ENCODE measurements at regions of chr12 and their contacts with region 1.

Region 1: GRCh38 chr12:55955800-55956508 is 9.9 kb downstream of the PMEL start:
- DNase-seq: peak; percentile 90 to 91
- H3K4me3 ChIP-seq: no peak overlapping the region
- H3K4me3 Mint-ChIP-seq: peak overlapping the region; percentile 60
- H3K27ac Mint-ChIP-seq: peak overlapping the region; percentile 93
- H3K4me1 ChIP-seq: peaks cover 44% of the 10 kb centered on the region
- H3K4me1 Mint-ChIP-seq: peaks cover 41% of the 10 kb centered on the region
- H3K27me3 ChIP-seq: no peaks in the 10 kb centered on the region
- H3K27me3 Mint-ChIP-seq: no peaks in the 10 kb centered on the region
- CTCF ChIP-seq: peak; percentile 69 to 74

Region 2: DNA sequence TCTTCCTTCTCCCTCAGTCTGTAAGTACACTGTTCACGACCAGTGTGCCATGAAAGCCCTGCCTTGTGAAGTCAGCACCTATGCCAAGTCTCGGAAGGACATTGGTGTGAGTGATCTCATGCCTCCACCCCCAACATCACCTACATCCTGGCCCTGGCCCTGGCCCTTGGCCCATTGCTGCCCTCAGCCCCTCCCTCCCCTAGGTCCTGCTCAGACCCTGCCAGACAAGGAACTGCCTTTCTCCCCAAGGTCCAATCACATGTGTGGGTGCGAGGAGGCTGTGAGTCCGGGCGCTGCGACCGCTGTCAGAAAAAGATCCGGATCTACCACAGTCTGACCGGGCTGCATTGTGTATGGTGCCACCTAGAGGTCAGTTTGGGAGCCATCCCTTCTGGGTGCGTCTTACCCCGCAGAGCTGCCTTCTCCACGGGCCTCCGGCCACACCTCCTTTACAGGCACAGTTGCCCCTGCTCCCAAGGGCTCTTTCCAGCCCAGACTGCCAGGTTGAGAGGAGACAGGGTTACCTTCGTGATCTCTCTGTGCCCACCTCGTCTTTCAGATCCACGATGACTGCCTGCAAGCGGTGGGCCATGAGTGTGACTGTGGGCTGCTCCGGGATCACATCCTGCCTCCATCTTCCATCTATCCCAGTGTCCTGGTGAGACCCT is 15.8 kb before region 1 on chr12:
- CTCF ChIA-PET with region 1: interaction called, 7 read pairs
- POLR2A ChIA-PET with region 1: no interaction called
- intact Hi-C with region 1: loop called (anchors 2 kb)
- DNase-seq: peak; percentile 84 to 87
- H3K4me3 ChIP-seq: no peak overlapping the region
- H3K4me3 Mint-ChIP-seq: no peak overlapping the region
- H3K27ac Mint-ChIP-seq: no peak overlapping the region
- H3K4me1 ChIP-seq: peaks cover 26% of the 10 kb centered on the region
- H3K4me1 Mint-ChIP-seq: peaks cover 16% of the 10 kb centered on the region
- H3K27me3 ChIP-seq: no peaks in the 10 kb centered on the region
- H3K27me3 Mint-ChIP-seq: no peaks in the 10 kb centered on the region
- CTCF ChIP-seq: peak; percentile 79 to 92

Region 3: GRCh38 chr12:55966408-55967281 is 10.7 kb after region 1 on chr12 and contains the start of gene CDK2:
- CTCF ChIA-PET with region 1: interaction called, 3 read pairs
- POLR2A ChIA-PET with region 1: no interaction called
- intact Hi-C with region 1: loop called (anchors 1 kb)
- DNase-seq: peak; percentile 91 to 96
- H3K4me3 ChIP-seq: peak within 1 kb of the TSS; percentile 90
- H3K4me3 Mint-ChIP-seq: peak within 1 kb of the TSS; percentile 98
- H3K27ac Mint-ChIP-seq: peak within 1 kb of the TSS; percentile 95
- H3K4me1 ChIP-seq: peaks cover 33% of the 10 kb centered on the region
- H3K4me1 Mint-ChIP-seq: peaks cover 23% of the 10 kb centered on the region
- H3K27me3 ChIP-seq: no peaks in the 10 kb centered on the region
- H3K27me3 Mint-ChIP-seq: no peaks in the 10 kb centered on the region
- CTCF ChIP-seq: no peak
- total RNA-seq, gene CDK2: 103 and 110 TPM in 2 replicates